Natural killer cell (primary cell): ENCODE measurements at regions of chr6 and their contacts with region 1.

Region 1: GRCh38 chr6:122530440-122531046 is 58.9 kb upstream of the SERINC1 start:
- DNase-seq: peak; percentile 19 to 80
- ATAC-seq: peak; percentile 78 to 94 (median 89)
- H3K4me3 ChIP-seq: no peak overlapping the region
- H3K4me3 Mint-ChIP-seq: no peak overlapping the region
- H3K27ac ChIP-seq: no peak overlapping the region
- H3K27ac Mint-ChIP-seq: no peak overlapping the region
- H3K4me1 ChIP-seq: no peaks in the 10 kb centered on the region
- H3K4me1 Mint-ChIP-seq: no peaks in the 10 kb centered on the region
- H3K27me3 ChIP-seq: peaks cover 12% of the 10 kb centered on the region
- H3K27me3 Mint-ChIP-seq: peaks cover 9 to 47% of the 10 kb centered on the region in 2 donors
- CTCF ChIP-seq: peak; percentile 82

Region 2: GRCh38 chr6:122381497-122382265 is 148.9 kb before region 1 on chr6:
- intact Hi-C with region 1: loop called (anchors 1 kb)
- DNase-seq: peak in 1 of 2 donors; percentile 84
- ATAC-seq: peak; percentile 79 to 95 (median 92)
- H3K4me3 ChIP-seq: no peak overlapping the region
- H3K4me3 Mint-ChIP-seq: no peak overlapping the region
- H3K27ac ChIP-seq: no peak overlapping the region
- H3K27ac Mint-ChIP-seq: no peak overlapping the region
- H3K4me1 ChIP-seq: no peaks in the 10 kb centered on the region
- H3K4me1 Mint-ChIP-seq: no peaks in the 10 kb centered on the region
- H3K27me3 ChIP-seq: peaks cover 2% of the 10 kb centered on the region
- H3K27me3 Mint-ChIP-seq: peaks cover 7 to 18% of the 10 kb centered on the region in 2 donors
- CTCF ChIP-seq: peak; percentile 71

Region 3: DNA sequence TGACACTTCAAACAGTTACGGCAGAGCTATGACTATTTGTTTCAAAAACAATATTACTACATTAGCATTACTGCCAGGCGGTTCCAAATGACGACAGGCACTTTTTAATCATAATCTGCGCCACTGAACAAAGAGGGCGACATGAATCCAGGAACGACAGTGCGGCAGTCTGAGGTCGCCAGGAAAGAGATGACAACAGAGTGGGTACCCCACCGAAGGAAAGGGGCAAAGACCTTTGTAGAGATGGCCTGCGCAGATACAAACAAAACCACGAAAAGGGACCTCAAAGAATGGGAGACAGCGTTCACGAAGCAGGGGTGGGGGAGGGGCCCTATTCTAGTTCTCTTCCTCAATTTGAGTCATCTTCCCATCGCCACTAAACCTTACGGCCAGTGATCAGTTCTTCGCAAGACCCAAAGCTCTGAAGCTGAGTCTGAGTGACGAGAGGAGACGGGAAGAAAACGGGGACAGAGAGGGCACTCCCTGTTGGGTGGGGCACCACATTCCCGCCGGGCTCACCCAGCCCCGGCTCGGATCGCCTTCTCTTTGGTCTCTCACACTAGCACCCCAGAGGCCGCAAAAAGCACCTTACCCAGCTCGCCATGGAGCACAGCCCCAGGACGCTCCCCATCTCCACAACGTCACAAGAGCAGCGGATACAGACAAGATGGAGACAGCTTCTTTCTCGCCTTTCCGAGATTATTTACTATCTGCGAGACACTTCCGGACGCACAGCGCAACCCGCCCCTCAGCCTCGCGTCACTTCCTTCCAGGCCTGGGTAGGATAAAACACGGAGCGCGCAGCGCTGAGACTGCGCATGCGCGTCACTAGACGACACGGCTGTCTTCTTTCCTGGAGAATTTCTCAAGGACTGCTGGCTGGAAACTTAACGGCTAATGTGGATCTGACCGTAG is 59.2 kb before region 1 on chr6 and contains the start of gene SERINC1:
- intact Hi-C with region 1: loop called (anchors 1 kb)
- DNase-seq: peak; percentile 90 to 98
- ATAC-seq: peak; percentile 94 to 98 (median 96)
- H3K4me3 ChIP-seq: peak within 1 kb of the TSS; percentile 76
- H3K4me3 Mint-ChIP-seq: peak within 1 kb of the TSS; percentile 100
- H3K27ac ChIP-seq: peak within 1 kb of the TSS; percentile 90
- H3K27ac Mint-ChIP-seq: peak within 1 kb of the TSS; percentile 99 to 100
- H3K4me1 ChIP-seq: peaks cover 20% of the 10 kb centered on the region
- H3K4me1 Mint-ChIP-seq: peaks cover 55 to 56% of the 10 kb centered on the region in 2 donors
- H3K27me3 ChIP-seq: no peaks in the 10 kb centered on the region
- H3K27me3 Mint-ChIP-seq: no peaks in the 10 kb centered on the region
- CTCF ChIP-seq: no peak
- total RNA-seq, gene SERINC1: 124 to 131 (median 128) TPM